ENCODE measurements at regions of chr1 and their contacts with region 1.

Region 1: DNA sequence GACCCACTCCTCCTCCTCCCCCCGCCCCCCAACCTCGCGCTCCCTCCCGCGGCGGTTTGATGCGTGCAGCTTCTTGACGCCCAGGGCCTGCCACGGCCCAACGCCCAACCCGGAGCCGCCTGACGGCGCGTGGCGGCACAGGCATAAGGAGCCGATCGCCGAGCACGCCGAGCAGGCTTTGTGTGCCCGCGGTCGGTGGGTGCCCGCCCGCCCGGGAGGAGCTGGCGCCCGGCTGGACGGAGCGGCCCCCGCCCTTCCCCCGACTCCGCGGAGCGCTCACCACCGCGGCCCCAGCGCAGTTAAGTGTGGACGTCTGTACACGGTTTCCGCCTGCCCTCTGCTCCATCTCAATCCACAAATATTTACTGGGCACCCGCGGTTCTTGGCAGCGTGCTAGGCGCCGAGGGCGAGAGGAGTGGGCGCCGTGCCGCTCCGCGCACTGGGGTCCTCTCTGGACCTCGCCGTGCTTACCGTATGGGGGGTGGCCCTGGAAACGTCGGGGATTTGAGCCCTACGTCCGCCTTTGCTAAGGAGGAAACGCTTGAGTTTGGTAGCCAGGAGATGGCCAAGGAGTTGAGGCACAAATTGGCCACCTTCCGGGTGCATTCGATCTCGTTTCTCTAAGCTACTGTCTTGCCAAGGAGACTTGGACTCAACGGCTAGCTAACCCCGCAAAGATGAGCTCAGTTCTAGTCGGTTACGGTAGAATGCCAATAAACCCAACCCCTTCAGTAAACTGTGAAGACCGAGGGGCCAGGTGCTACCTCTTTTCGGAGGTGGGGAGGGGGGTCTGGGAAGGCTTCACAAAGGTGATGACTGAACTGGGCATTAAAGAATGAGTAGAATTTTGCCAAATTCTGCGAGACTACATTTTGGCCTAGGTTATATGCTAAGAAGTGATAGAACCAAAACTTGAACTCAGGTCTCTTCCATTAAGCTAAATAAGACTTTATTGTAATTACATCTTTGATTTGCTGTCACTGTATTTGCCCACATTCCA is 583 bp upstream of the HDGF start:
- DNase-seq: peak; percentile 98
- H3K4me3 Mint-ChIP-seq: peak overlapping the region; percentile 97
- H3K27ac Mint-ChIP-seq: peak overlapping the region; percentile 96
- H3K4me1 Mint-ChIP-seq: peaks cover 33% of the 10 kb centered on the region
- H3K27me3 Mint-ChIP-seq: no peaks in the 10 kb centered on the region

Region 2: GRCh38 chr1:156641761-156642264 is 110.2 kb before region 1 on chr1 and contains the start of gene BCAN:
- intact Hi-C with region 1: no loop called
- DNase-seq: peak; percentile 69
- H3K4me3 Mint-ChIP-seq: peak within 1 kb of the TSS; percentile 73
- H3K27ac Mint-ChIP-seq: no peak within 1 kb of the TSS
- H3K4me1 Mint-ChIP-seq: peaks cover 26% of the 10 kb centered on the region
- H3K27me3 Mint-ChIP-seq: peaks cover 74% of the 10 kb centered on the region
- total RNA-seq, gene BCAN: not detected in 2 replicates

Region 3: DNA sequence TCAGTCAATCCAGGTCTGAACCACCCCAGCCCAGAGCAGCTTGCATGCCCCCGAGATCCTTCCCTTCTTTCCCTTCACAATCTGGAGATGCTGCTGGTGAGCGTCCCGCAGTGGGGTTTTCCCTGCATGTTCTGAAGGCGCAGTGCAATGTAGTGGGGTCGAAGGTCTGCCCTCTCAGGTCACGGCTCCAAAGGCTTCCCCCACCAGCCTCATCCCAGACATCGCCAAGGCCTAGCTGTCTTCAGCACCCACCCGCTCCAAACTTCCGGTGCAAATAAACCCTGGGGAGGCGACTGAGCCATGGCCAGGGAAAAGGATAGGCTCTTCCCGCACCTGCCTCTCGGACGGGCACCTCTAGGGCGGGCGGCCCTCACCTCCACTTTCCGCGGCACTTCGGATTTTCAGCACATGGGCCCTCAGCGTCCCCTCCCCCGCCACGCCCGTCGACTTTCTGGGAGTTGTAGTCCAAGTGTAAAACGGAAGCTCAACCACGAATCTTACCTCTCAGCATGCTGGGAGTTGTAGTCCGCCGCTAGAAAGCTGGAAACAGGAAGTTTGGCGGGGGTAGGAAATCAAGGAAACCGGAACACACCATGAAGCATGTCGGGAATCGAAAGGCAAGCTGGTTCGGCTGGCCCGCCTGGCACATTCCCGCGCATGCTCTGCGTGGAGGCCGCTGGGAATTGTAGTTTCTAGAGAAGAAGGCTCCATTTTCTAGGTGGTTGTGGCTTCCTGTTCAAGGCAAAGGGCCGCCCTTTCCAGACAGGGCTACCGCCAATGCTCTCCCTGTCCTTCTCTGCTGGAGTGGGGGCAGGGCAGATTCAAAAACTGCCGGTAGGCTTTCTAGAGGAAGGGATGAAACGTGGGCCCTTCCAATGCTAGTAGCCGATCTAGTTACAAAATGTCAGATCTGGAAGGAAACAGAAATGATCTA is 11.1 kb before region 1 on chr1 and contains the start of gene MRPL24:
- intact Hi-C with region 1: loop called (anchors 1 kb)
- DNase-seq: peak; percentile 99
- H3K4me3 Mint-ChIP-seq: peak within 1 kb of the TSS; percentile 98
- H3K27ac Mint-ChIP-seq: peak within 1 kb of the TSS; percentile 96
- H3K4me1 Mint-ChIP-seq: peaks cover 25% of the 10 kb centered on the region
- H3K27me3 Mint-ChIP-seq: no peaks in the 10 kb centered on the region
- total RNA-seq, gene MRPL24: 134 and 135 TPM in 2 replicates

Region 4: DNA sequence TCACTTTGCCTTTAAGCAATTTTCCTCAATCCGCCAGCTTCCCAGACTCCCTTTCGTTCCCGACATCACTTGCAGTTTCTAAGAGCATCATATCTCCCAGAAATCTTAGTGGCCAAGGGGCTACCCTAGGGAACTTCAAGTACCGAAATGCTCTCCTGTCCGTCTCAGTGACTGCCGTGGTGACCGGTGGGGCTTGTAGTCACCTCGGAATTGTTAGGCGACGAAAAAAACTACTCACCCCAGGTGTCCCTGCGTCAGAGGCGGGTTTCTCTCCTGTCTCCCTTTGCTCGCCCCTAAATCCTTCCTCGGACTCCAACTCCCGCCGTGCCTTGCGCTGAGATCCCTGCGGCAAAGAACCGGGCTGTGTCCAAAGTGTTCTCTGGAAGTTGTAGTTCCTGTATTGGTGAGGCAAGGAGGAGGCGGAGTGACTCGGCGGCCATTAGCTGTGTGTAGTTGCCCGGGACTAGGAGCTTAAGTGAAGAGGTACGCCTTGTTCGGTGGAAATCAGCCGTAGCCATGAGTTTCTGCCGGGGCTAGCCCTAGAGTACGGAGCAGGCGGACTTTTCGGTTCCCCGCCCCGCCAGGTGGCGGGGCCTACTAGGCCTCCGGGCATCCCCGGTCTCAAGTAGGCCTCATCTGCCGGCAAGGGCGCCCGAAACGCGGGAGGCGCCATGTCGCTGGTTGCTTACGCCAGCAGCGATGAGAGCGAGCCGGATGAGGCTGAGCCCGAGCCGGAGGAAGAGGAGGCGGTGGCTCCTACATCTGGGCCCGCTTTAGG is 15.2 kb after region 1 on chr1 and contains the start of gene PRCC:
- intact Hi-C with region 1: loop called (anchors 1 kb)
- DNase-seq: peak; percentile 99
- H3K4me3 Mint-ChIP-seq: no peak within 1 kb of the TSS
- H3K27ac Mint-ChIP-seq: peak within 1 kb of the TSS; percentile 79
- H3K4me1 Mint-ChIP-seq: peaks cover 33% of the 10 kb centered on the region
- H3K27me3 Mint-ChIP-seq: no peaks in the 10 kb centered on the region
- total RNA-seq, gene PRCC: 106 and 120 TPM in 2 replicates

Measured in activated CD4-positive, alpha-beta T cell treated with anti-CD3 and anti-CD28 coated beads, Interleukin-2, amount 10 ng/mL, durations not matched to agents 24 days and 14 days (primary cell).